Ovary (tissue), 10 donors: ENCODE measurements at regions of chr2 and their contacts with region 1.

Region 1: GRCh38 chr2:176565641-176566323 is 296.5 kb downstream of the MTX2 start:
- DNase-seq: no peak
- H3K4me3 ChIP-seq: no peak overlapping the region
- H3K27ac ChIP-seq: no peak overlapping the region
- H3K4me1 ChIP-seq: no peaks in the 10 kb centered on the region
- H3K27me3 ChIP-seq: no peaks in the 10 kb centered on the region
- CTCF ChIP-seq: no peak
- EP300 ChIP-seq: no peak
- POLR2A ChIP-seq: no peak

Region 2: GRCh38 chr2:175366815-175367214 is 1199.0 kb before region 1 on chr2:
- intact Hi-C with region 1: no loop called
- DNase-seq: no peak
- H3K4me3 ChIP-seq: no peak overlapping the region
- H3K27ac ChIP-seq: no peak overlapping the region
- H3K4me1 ChIP-seq: no peaks in the 10 kb centered on the region
- H3K27me3 ChIP-seq: no peaks in the 10 kb centered on the region
- CTCF ChIP-seq: no peak
- EP300 ChIP-seq: no peak
- POLR2A ChIP-seq: no peak

Region 3: DNA sequence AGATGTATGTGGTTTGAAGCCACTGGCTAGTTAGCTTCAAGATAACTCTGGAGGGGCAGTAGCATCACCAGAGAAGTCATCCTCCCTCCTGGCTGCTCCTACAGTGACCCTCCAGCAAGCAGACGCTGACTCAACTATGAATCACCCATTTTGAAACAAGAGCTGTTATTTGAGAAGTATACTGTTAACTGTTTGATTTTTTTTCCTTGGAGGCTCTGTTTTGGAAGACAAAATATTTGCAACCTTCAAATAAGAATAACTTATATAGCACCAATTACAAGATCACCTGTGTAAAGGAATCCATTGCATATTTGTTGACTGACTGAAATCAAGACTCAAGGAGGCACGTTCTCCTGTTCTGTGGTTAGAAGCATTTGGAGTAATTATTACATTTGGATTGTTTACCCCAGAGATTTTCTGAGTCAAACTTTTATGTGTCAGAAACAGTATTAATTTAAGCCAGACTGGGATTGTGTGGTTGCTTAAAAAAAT is 17.3 kb after region 1 on chr2:
- intact Hi-C with region 1: no loop called
- DNase-seq: peak in 4 of 5 donors; percentile 21 to 41 (median 30)
- H3K4me3 ChIP-seq: no peak overlapping the region
- H3K27ac ChIP-seq: no peak overlapping the region
- H3K4me1 ChIP-seq: peaks cover 5% of the 10 kb centered on the region
- H3K27me3 ChIP-seq: no peaks in the 10 kb centered on the region
- CTCF ChIP-seq: no peak
- EP300 ChIP-seq: no peak
- POLR2A ChIP-seq: no peak

Region 4: GRCh38 chr2:176626796-176627195 is 61.0 kb after region 1 on chr2:
- intact Hi-C with region 1: loop called in 1 of 4 experiments (anchors 10 kb)
- DNase-seq: no peak
- H3K4me3 ChIP-seq: no peak overlapping the region
- H3K27ac ChIP-seq: no peak overlapping the region
- H3K4me1 ChIP-seq: no peaks in the 10 kb centered on the region
- H3K27me3 ChIP-seq: no peaks in the 10 kb centered on the region
- CTCF ChIP-seq: no peak
- EP300 ChIP-seq: no peak
- POLR2A ChIP-seq: no peak

Region 5: DNA sequence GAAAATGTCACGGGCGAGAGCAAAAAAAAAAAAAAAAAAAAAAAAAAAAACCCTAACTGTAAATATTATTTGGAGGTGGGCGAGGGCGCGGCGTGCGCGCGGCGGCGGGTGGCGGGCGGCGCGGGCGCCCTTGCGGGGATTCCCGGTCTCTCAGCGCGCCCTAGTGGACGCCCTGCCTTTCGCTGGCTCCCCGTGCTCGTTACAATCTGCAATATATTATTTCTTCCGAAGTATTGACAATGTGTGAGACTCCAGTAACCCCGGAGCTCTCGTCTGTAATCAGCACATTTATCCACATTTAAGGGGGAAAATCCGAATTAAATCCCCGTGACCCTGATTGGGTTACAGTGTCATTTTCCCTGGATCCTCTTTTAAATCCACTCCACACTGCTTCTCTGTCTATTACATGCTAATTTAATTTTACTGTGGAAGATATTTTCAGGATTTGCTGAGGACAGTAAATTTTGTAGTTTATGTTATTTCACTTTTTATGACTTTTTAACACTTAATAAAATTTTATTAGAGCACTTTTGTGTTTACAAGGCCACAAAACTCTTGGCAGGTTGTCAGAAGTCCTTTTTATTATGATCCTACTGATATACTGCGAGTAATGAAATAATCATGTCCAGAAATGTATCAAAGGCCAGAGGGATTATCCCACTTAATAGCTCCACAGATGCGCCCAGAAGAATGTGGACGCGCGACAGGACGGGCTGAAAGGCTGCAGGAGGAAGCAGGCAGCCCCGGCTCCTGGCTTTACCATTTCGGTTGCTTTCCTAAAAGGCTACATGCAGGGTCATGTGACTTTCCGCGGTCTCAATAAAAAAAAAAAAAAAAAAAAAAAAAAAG is 72.6 kb after region 1 on chr2:
- intact Hi-C with region 1: no loop called
- DNase-seq: peak; percentile 73 to 88 (median 83)
- H3K4me3 ChIP-seq: peak overlapping the region; percentile 59
- H3K27ac ChIP-seq: peak overlapping the region; percentile 78 to 88
- H3K4me1 ChIP-seq: no peaks in the 10 kb centered on the region
- H3K27me3 ChIP-seq: no peaks in the 10 kb centered on the region
- CTCF ChIP-seq: peak; percentile 61 to 83 (median 63)
- EP300 ChIP-seq: no peak
- POLR2A ChIP-seq: no peak

Region 6: GRCh38 chr2:177380181-177380580 is 814.4 kb after region 1 on chr2:
- intact Hi-C with region 1: no loop called
- DNase-seq: no peak
- H3K4me3 ChIP-seq: no peak overlapping the region
- H3K27ac ChIP-seq: no peak overlapping the region
- H3K4me1 ChIP-seq: no peaks in the 10 kb centered on the region
- H3K27me3 ChIP-seq: no peaks in the 10 kb centered on the region
- CTCF ChIP-seq: no peak
- EP300 ChIP-seq: no peak
- POLR2A ChIP-seq: no peak